Thyroid gland (tissue), 4 donors: ENCODE measurements at regions of chr7 and their contacts with region 1.

Region 1: GRCh38 chr7:44078521-44078920 is 3.8 kb downstream of the POLM start:
- DNase-seq: peak; percentile 86 to 87
- H3K4me3 ChIP-seq: no peak overlapping the region
- H3K27ac ChIP-seq: peak overlapping the region; percentile 31 to 62 (median 60)
- H3K4me1 ChIP-seq: peaks cover 27 to 49% of the 10 kb centered on the region in 2 donors
- H3K27me3 ChIP-seq: no peaks in the 10 kb centered on the region
- CTCF ChIP-seq: no peak
- POLR2A ChIP-seq: no peak

Region 2: DNA sequence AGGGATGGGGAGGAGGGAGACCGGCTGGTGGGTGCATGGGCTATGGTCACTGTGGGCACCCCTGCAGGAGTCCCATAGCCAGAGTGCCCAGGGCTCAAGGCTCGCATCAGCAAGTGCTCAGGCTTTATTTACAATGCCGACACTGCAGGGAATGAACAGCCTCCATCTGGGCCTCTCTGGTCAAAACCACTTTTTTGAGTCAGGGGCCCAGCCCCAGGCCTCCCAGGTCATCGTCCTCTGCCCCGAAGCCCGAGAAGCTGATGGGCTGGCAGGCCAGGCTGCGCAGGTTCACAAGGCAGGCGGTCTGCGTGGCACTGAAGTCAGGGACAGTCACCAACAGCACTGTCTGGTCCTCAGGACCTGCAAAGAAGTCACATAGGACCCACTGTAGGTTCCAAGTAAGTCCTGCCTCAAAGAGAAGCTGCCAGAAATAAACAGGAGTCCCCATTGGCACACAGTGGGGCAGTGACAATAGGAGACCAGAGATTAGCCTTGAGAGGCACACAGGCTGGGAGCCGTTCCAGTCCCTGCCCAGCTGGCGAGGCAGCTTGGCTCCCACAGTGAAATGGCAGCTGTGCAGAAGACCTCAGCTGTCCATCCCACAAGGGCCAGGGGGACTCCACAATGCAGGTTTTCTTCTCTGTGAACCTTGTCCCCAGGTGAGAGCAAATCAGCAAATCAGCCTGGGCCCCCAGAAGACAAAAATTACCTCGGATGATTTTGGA is 36.2 kb after region 1 on chr7:
- intact Hi-C with region 1: loop called (anchors 5 kb)
- DNase-seq: no peak
- H3K4me3 ChIP-seq: no peak overlapping the region
- H3K27ac ChIP-seq: no peak overlapping the region
- H3K4me1 ChIP-seq: no peaks in the 10 kb centered on the region
- H3K27me3 ChIP-seq: no peaks in the 10 kb centered on the region
- CTCF ChIP-seq: no peak
- POLR2A ChIP-seq: no peak